Ascending aorta (tissue), 2 donors: ENCODE measurements at regions of chr4 and their contacts with region 1.

Region 1: DNA sequence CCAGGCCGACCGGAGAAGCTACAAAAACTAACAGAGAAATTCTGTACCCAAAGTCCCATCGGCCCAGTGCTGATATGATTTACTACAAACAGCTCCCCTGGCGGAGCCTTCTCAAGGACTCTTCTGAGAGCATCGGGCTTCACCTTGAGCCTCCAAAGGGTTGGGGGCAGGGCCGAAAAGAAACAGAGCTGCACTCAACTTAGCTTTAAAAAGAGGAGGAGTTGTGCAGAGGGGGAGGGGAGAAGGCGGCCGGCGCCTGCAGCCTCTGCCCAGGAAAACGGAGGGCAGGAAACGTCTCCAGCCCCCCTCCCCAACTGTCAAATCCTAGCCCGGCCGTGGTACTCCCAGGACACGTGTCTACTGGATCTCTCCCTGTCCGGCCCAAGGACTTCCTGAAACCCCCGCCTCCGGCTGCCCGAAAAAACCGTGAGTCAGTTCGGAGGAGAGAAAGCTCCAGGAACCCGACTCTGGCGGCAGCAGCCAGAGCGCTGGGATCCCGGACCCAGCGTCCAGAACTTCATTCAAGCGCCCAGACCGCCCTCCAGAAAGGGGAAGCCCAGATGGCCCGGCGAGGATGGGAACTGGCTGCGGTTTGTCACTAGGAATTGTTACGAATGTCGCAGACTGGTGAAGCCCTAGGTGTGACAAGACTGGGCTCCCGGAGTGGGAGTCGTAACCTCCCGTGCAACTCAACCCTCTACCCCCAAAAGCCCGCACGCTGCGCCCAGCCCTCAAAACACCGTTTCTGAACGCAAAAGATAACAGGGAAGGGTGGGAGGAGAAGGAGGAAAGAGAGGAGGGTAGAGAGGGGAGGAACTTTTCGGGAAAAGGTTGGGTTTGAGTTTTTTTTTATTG is 973 bp downstream of the ADAMTS3 start:
- DNase-seq: peak; percentile 30 to 88
- H3K4me3 ChIP-seq: peak overlapping the region; percentile 76 to 78
- H3K27ac ChIP-seq: peak overlapping the region; percentile 76 to 80
- H3K4me1 ChIP-seq: peaks cover 0 to 11% of the 10 kb centered on the region in 2 donors
- H3K27me3 ChIP-seq: no peaks in the 10 kb centered on the region
- CTCF ChIP-seq: peak in 2 of 3 experiments; percentile 28 to 31

Region 2: DNA sequence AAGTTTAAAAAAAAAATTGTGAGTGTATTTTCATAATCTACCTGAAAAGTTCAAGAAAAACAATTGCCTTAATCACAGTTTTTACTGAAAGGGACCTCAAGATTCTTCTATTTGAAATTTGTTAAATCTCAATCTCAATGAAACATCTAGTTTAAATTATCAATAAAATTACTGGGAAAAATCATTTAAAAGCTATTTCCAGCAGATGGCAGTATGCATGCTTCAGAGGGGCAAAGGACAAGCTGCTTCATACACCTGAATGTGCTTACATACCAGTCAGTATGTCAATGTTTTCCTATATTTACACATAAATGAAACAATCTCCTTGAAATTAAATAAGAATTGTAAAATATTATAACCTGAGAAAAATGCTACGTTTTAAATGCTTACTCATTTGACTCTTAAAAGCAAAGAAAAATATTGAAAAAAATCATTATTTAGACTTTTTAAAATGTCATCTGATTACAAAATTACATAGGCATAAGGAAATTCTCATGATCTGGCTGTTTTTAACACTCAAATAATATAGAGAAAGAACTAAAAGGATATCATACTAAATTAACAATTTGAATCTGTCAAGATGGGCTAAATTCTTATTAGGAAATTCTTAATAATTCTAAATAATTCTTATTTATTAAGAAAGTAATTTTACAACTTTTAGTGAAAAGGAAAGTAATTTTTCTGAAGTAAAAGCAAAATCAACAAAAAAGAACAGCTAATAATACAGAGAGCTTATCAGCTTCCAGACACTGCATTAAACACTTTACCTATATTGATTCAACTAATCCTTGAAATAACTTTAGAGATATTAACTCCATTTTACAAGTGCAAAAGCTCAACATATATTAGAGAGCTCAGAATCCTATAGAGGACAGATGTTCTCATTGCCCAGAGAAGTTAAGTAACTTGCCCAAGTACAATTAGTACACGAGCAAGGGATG is 241.1 kb before region 1 on chr4:
- intact Hi-C with region 1: loop called (anchors 5 kb)
- DNase-seq: no peak
- H3K4me3 ChIP-seq: no peak overlapping the region
- H3K27ac ChIP-seq: no peak overlapping the region
- H3K4me1 ChIP-seq: no peaks in the 10 kb centered on the region
- H3K27me3 ChIP-seq: no peaks in the 10 kb centered on the region
- CTCF ChIP-seq: peak in 2 of 3 experiments; percentile 48 to 71

Region 3: GRCh38 chr4:72390409-72390808 is 177.6 kb before region 1 on chr4:
- intact Hi-C with region 1: loop called (anchors 2 kb)
- DNase-seq: no peak
- H3K4me3 ChIP-seq: no peak overlapping the region
- H3K27ac ChIP-seq: peak overlapping the region; percentile 6 to 58
- H3K4me1 ChIP-seq: peaks cover 0 to 13% of the 10 kb centered on the region in 2 donors
- H3K27me3 ChIP-seq: no peaks in the 10 kb centered on the region
- CTCF ChIP-seq: no peak

Region 4: DNA sequence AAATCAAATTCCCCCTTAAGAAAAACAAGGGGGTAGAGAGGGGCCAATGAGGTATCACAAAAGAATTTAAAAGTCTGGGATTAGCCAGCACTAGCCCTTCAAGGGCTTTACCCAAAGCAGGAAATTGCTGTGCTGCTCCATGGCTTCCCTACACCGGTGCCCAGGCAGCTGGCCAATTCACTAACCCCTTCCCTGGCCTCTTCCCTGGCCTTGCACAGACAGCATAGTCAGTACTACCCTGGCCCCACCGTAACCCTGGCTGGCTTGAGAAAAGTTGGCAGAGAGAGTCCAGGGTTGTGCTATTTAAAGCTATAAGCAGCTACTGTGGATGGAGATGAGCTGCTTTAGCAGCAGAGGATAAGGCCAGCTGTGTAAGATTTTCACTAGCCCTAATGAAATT is 42.1 kb before region 1 on chr4:
- intact Hi-C with region 1: loop called (anchors 5 kb)
- DNase-seq: peak in 1 of 2 donors; percentile 66
- H3K4me3 ChIP-seq: no peak overlapping the region
- H3K27ac ChIP-seq: no peak overlapping the region
- H3K4me1 ChIP-seq: peaks cover 0 to 7% of the 10 kb centered on the region in 2 donors
- H3K27me3 ChIP-seq: no peaks in the 10 kb centered on the region
- CTCF ChIP-seq: no peak

Region 5: GRCh38 chr4:72641611-72642010 is 73.6 kb after region 1 on chr4:
- intact Hi-C with region 1: no loop called
- DNase-seq: no peak
- H3K4me3 ChIP-seq: no peak overlapping the region
- H3K27ac ChIP-seq: no peak overlapping the region
- H3K4me1 ChIP-seq: no peaks in the 10 kb centered on the region
- H3K27me3 ChIP-seq: no peaks in the 10 kb centered on the region
- CTCF ChIP-seq: no peak

Region 6: GRCh38 chr4:72701987-72702819 is 134.2 kb after region 1 on chr4:
- intact Hi-C with region 1: no loop called
- DNase-seq: no peak
- H3K4me3 ChIP-seq: peak overlapping the region; percentile 49 to 59
- H3K27ac ChIP-seq: no peak overlapping the region
- H3K4me1 ChIP-seq: no peaks in the 10 kb centered on the region
- H3K27me3 ChIP-seq: no peaks in the 10 kb centered on the region
- CTCF ChIP-seq: peak; percentile 35 to 71 (median 67)

Region 7: GRCh38 chr4:72767618-72768302 is 199.7 kb after region 1 on chr4:
- intact Hi-C with region 1: loop called (anchors 10 kb)
- DNase-seq: no peak
- H3K4me3 ChIP-seq: peak overlapping the region in 1 of 2 donors; percentile 52
- H3K27ac ChIP-seq: peak overlapping the region; percentile 62 to 84
- H3K4me1 ChIP-seq: no peaks in the 10 kb centered on the region
- H3K27me3 ChIP-seq: no peaks in the 10 kb centered on the region
- CTCF ChIP-seq: no peak

Region 8: GRCh38 chr4:73069338-73070073 is 501.5 kb after region 1 on chr4 and contains the start of gene COX18:
- intact Hi-C with region 1: loop called (anchors 1 kb)
- DNase-seq: peak; percentile 93 to 99
- H3K4me3 ChIP-seq: peak within 1 kb of the TSS; percentile 60 to 99
- H3K27ac ChIP-seq: peak within 1 kb of the TSS; percentile 88 to 96
- H3K4me1 ChIP-seq: peaks cover 3 to 7% of the 10 kb centered on the region in 2 donors
- H3K27me3 ChIP-seq: no peaks in the 10 kb centered on the region
- CTCF ChIP-seq: peak in 1 of 3 experiments; percentile 6
- total RNA-seq, gene COX18: 22.7 TPM